GM18951 (cell line): ENCODE measurements at regions of chr2 and their contacts with region 1.

Region 1: GRCh38 chr2:220687231-220687843 is 884.8 kb downstream of the EPHA4 start:
- POLR2A ChIP-seq: no peak

Region 2: GRCh38 chr2:220489121-220489520 is 198.2 kb before region 1 on chr2:
- in situ Hi-C with region 1: no loop called
- POLR2A ChIP-seq: no peak

Region 3: GRCh38 chr2:221569871-221570270 is 882.5 kb after region 1 on chr2:
- in situ Hi-C with region 1: loop called (anchors 10 kb)
- POLR2A ChIP-seq: no peak